Gastrocnemius medialis (tissue), 4 donors: ENCODE measurements at regions of chr4 and their contacts with region 1.

Region 1: GRCh38 chr4:78517050-78517652 is 34.4 kb upstream of the ANXA3 start:
- DNase-seq: no peak
- ATAC-seq: no peak
- H3K4me3 ChIP-seq: no peak overlapping the region
- H3K27ac ChIP-seq: no peak overlapping the region
- H3K4me1 ChIP-seq: no peaks in the 10 kb centered on the region
- H3K27me3 ChIP-seq: no peaks in the 10 kb centered on the region
- CTCF ChIP-seq: peak in 4 of 5 experiments; percentile 11 to 56 (median 40)
- POLR2A ChIP-seq: no peak

Region 2: GRCh38 chr4:77959566-77960338 is 557.4 kb before region 1 on chr4:
- in situ Hi-C with region 1: loop called (anchors 5 to 25 kb)
- intact Hi-C with region 1: loop called (anchors 2 kb)
- DNase-seq: no peak
- ATAC-seq: peak in 1 of 2 donors; percentile 62
- H3K4me3 ChIP-seq: peak overlapping the region; percentile 9 to 50 (median 41)
- H3K27ac ChIP-seq: no peak overlapping the region
- H3K4me1 ChIP-seq: peaks cover 0 to 7% of the 10 kb centered on the region in 2 donors
- H3K27me3 ChIP-seq: no peaks in the 10 kb centered on the region
- CTCF ChIP-seq: peak; percentile 46 to 73 (median 66)
- POLR2A ChIP-seq: no peak

Region 3: DNA sequence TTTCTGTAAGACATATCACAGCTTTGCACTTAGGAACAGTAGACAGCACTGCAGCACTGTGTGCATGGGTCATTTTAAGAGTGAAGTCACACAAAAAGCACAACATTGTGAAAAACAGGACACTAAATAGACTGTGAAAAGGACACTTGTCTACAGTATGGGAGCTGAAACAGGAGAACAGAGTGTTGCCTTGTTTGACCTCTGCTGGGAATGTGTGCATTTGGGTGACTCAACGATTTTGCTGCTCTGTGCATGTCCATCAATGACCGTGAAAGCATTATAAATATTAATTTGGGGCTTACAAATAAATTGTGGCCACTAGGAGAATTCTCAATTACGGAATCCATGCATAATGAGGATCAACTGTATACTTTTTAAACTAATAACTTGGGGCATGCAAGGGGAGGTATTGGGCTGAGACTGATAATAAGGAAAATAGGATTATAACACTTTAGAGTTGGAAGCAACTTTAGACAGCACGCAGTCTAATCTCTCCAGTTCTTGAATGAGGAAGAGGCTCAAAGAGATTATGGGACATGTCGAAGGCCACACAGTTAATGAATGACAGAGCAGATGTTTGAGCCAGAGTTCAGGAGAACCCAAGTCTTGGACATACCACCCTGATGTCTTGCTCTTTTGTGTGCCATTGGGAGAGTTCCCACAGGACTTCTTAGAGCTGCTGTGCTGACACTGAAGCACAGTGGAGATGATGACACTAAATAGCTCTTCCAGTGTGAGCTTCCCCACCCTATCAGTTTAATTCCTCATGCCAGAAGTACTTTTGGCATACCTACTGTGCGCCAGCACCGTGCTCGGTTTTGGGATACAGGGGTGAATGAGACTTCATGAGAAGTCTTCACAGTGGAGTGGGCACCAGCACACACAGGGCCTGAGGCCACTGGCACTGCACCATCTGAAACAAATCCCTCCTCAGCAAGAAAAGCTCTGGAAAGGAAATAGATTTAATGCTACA is 380.8 kb before region 1 on chr4:
- in situ Hi-C with region 1: no loop called
- intact Hi-C with region 1: no loop called
- DNase-seq: no peak
- ATAC-seq: no peak
- H3K4me3 ChIP-seq: no peak overlapping the region
- H3K27ac ChIP-seq: no peak overlapping the region
- H3K4me1 ChIP-seq: peaks cover 7 to 16% of the 10 kb centered on the region in 2 donors
- H3K27me3 ChIP-seq: no peaks in the 10 kb centered on the region
- CTCF ChIP-seq: no peak
- POLR2A ChIP-seq: no peak